Activated B cell treated with CpG ODN at 0.5 μM for 24 hours (primary cell): ENCODE measurements at regions of chr12 and their contacts with region 1.

Region 1: DNA sequence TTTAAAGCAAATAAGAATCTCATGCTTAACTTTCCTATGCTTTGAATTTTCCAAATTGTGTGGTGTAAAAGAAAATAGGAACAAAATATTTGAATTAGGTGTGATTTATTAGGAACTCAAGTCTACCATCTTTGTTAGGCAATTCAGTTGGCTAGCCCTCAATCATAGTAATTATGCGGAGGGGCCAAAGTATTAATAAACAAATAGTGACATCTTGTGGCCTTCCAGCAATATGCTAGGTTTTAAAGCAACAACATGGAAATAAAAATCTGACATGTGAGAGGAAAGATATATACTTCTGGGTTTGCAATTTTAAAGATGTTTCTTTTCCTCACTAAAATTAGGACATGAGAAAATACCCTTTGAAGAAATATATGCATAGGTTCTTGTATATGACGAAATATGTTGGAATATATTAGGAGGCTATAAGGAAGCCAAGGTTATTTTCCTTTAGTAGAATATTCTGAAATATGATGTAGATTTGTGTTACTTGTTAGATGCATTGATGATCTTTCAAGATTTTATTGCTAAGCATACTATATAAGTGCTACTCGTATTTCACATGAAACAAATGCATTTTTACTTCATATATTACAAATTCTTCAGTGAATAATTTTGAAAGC is 200.4 kb downstream of the PTPRO start:
- DNase-seq: no peak
- ATAC-seq: no peak
- H3K4me3 Mint-ChIP-seq: no peak overlapping the region
- H3K27ac Mint-ChIP-seq: no peak overlapping the region
- H3K4me1 Mint-ChIP-seq: peaks cover 12% of the 10 kb centered on the region
- H3K27me3 Mint-ChIP-seq: peaks cover 15% of the 10 kb centered on the region
- CTCF ChIP-seq: no peak

Region 2: GRCh38 chr12:14723763-14724162 is 798.9 kb before region 1 on chr12:
- CTCF ChIA-PET with region 1: no interaction called
- POLR2A ChIA-PET with region 1: no interaction called
- intact Hi-C with region 1: loop called (anchors 1 kb)
- DNase-seq: no peak
- ATAC-seq: peak; percentile 76
- H3K4me3 Mint-ChIP-seq: no peak overlapping the region
- H3K27ac Mint-ChIP-seq: no peak overlapping the region
- H3K4me1 Mint-ChIP-seq: no peaks in the 10 kb centered on the region
- H3K27me3 Mint-ChIP-seq: peaks cover 11% of the 10 kb centered on the region
- CTCF ChIP-seq: peak; percentile 25

Region 3: GRCh38 chr12:15151161-15152120 is 371.2 kb before region 1 on chr12:
- CTCF ChIA-PET with region 1: interaction called, 4 read pairs
- POLR2A ChIA-PET with region 1: no interaction called
- intact Hi-C with region 1: loop called (anchors 1 kb)
- DNase-seq: no peak
- ATAC-seq: no peak
- H3K4me3 Mint-ChIP-seq: no peak overlapping the region
- H3K27ac Mint-ChIP-seq: no peak overlapping the region
- H3K4me1 Mint-ChIP-seq: no peaks in the 10 kb centered on the region
- H3K27me3 Mint-ChIP-seq: no peaks in the 10 kb centered on the region
- CTCF ChIP-seq: no peak

Region 4: GRCh38 chr12:15227004-15227679 is 295.5 kb before region 1 on chr12:
- CTCF ChIA-PET with region 1: interaction called, 3 read pairs
- POLR2A ChIA-PET with region 1: no interaction called
- intact Hi-C with region 1: loop called (anchors 1 kb)
- DNase-seq: no peak
- ATAC-seq: no peak
- H3K4me3 Mint-ChIP-seq: no peak overlapping the region
- H3K27ac Mint-ChIP-seq: no peak overlapping the region
- H3K4me1 Mint-ChIP-seq: no peaks in the 10 kb centered on the region
- H3K27me3 Mint-ChIP-seq: peaks cover 29% of the 10 kb centered on the region
- CTCF ChIP-seq: no peak

Region 5: DNA sequence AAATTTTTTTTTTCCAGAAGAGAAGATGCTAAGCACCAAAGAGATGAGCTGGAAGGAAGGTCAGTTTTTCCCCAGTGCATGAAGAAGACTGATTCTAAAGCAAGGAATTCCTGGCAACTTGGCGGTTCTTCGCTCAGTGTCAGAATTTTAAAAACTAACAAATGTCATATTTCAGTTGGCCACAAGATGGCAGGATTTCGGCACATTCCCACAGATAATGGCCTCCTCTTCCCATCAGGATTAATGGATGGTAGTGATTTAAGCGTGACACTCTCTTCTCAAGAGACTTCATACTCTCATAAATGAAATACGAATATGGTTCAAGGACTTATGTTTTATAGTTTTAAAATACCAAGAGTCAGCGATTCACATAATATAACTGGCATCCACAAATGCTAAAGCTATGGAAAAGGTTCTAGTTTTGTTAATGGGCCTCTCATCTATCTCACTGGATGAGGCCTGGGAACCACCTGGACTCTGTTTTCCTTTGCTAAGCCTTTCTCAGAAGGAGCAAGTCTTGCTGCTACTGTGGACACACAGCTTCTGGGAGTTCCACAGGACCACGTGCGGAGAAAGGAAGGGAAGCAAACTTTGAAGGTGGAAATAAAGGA is 246.5 kb before region 1 on chr12:
- CTCF ChIA-PET with region 1: interaction called, 14 read pairs
- POLR2A ChIA-PET with region 1: no interaction called
- intact Hi-C with region 1: loop called (anchors 1 kb)
- DNase-seq: no peak
- ATAC-seq: no peak
- H3K4me3 Mint-ChIP-seq: no peak overlapping the region
- H3K27ac Mint-ChIP-seq: no peak overlapping the region
- H3K4me1 Mint-ChIP-seq: no peaks in the 10 kb centered on the region
- H3K27me3 Mint-ChIP-seq: peaks cover 8% of the 10 kb centered on the region
- CTCF ChIP-seq: no peak